ENCODE measurements at regions of chr12 and their contacts with region 1.

Region 1: GRCh38 chr12:56041552-56042429 is at the start of gene RPS26:
- DNase-seq: peak; percentile 85 to 99
- ATAC-seq: peak; percentile 89 to 97 (median 93)
- H3K4me3 ChIP-seq: peak within 1 kb of the TSS; percentile 83
- H3K4me3 Mint-ChIP-seq: peak within 1 kb of the TSS; percentile 99
- H3K27ac ChIP-seq: peak within 1 kb of the TSS; percentile 86
- H3K27ac Mint-ChIP-seq: peak within 1 kb of the TSS; percentile 93 to 98
- H3K4me1 ChIP-seq: peaks cover 14% of the 10 kb centered on the region
- H3K4me1 Mint-ChIP-seq: peaks cover 24 to 25% of the 10 kb centered on the region in 2 donors
- H3K27me3 ChIP-seq: no peaks in the 10 kb centered on the region
- H3K27me3 Mint-ChIP-seq: no peaks in the 10 kb centered on the region
- CTCF ChIP-seq: no peak
- total RNA-seq, gene RPS26: 29.5 to 50.3 (median 35.5) TPM

Region 2: DNA sequence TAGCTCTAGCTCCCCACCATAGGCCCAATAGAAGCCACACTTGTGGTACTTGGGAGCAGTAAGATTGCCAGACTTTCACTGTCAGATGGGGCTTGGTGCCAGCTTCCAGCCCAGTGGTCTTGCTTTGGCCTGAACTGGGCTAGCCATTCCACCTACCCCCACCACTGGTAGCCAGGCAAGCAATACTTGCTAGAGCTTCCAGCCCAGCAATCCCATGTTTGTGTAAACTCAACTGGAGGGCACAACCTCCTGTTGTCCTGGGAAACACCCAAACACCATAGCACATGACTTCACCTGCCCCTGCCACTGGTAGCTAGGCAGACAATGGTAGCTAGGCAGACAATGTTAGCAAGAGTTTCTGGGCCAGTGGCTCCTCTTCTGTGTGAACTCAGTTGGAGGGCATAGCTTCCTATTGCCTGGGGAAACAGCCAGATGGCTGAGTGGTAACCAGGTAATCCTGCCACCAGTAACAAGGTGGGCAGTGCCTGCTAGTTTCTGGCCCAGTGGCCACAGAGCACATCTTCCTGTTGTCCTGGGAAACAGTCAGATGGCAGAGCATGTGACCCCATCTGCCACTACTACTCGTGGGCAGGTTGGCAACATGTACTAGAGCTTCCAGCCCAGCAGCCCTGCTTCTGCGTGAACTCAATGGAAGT is 621.4 kb before region 1 on chr12:
- intact Hi-C with region 1: no loop called
- DNase-seq: no peak
- ATAC-seq: no peak
- H3K4me3 ChIP-seq: no peak overlapping the region
- H3K4me3 Mint-ChIP-seq: no peak overlapping the region
- H3K27ac ChIP-seq: no peak overlapping the region
- H3K27ac Mint-ChIP-seq: no peak overlapping the region
- H3K4me1 ChIP-seq: no peaks in the 10 kb centered on the region
- H3K4me1 Mint-ChIP-seq: peaks cover 0 to 4% of the 10 kb centered on the region in 2 donors
- H3K27me3 ChIP-seq: peaks cover 3% of the 10 kb centered on the region
- H3K27me3 Mint-ChIP-seq: peaks cover 20 to 37% of the 10 kb centered on the region in 2 donors
- CTCF ChIP-seq: no peak

Region 3: DNA sequence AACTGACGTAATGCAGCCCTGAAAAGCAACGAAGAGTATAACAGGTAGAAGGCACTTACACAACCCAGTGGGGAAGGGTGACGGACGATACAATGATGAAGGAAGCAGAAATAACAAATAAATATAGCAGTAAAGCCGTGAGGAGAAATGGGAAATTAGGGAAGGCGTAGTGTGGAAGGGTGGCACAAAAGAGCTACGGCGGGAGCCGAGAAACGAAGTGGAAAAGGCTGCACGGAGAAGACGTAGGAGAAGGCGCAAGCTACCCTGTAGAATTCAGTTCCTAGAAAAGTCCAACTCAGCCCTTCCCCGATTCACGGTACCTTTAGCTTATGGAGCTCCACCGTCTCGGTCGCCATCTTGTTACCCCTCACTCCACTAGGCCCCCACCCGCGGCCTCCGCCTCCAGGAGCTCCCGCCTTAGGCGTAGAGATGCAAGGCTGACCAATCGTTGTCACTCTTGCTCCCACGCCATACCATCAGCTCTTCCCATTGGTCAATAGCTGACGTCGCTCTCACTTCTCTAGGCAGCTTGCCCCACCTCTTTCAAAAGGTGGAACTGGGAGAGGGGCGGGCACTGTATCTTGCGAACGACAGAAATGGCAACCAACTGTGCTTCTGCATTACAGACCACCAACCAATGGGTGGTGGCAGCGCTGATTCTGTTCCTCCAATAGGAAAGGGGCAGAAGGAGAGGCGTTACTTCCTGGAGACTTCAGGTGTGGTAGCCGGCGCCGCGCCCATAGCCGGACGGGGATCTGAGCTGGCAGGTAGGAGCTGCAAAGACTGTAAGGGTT is 224.2 kb before region 1 on chr12 and contains the starts of genes ORMDL2 and SARNP:
- intact Hi-C with region 1: loop called (anchors 5 kb)
- DNase-seq: peak; percentile 88 to 99
- ATAC-seq: peak; percentile 91 to 97 (median 92)
- H3K4me3 ChIP-seq: peak within 1 kb of the TSS; percentile 85
- H3K4me3 Mint-ChIP-seq: no peak within 1 kb of the TSS
- H3K27ac ChIP-seq: peak within 1 kb of the TSS; percentile 78
- H3K27ac Mint-ChIP-seq: no peak within 1 kb of the TSS
- H3K4me1 ChIP-seq: peaks cover 22% of the 10 kb centered on the region
- H3K4me1 Mint-ChIP-seq: peaks cover 22 to 29% of the 10 kb centered on the region in 2 donors
- H3K27me3 ChIP-seq: no peaks in the 10 kb centered on the region
- H3K27me3 Mint-ChIP-seq: no peaks in the 10 kb centered on the region
- CTCF ChIP-seq: no peak
- total RNA-seq, gene ORMDL2: 21.3 to 36.3 (median 23.1) TPM
- total RNA-seq, gene SARNP: 50.5 to 57.0 (median 51.2) TPM

Region 4: DNA sequence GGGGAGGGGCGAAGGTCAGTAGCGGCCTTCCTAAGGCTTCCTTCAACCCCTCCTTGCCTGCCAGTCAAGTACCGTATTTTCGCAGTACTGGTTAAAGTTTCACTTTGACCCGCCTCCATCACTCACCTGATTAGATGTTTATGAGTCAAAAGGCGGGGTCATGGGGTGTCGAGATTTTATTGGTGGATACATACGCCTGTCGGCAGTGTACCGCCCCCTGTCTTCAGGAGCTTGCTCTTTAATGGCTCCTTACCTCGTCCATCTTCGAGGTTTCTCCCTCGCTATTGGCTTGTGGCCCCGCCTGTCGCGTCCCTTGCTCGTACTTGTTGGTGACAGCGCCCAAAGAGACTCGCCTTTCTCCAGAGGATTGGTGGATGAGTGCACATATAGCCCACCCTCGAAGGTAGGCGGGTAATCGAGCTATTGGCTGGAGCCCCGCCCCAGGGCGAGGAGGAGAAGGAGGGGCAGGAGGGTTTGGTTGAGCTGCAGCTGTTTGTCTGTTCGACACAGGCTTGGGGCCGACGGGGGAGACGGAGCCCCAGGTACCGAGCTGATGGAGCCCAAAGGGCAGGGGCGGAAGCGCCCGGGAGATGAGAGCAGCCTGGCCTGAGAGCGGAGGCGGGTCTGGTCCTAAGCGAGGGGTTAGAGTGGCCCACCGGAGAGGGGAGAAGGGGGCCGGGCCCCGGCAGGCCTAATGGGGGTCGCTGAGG is 68.0 kb before region 1 on chr12 and contains the start of gene RAB5B:
- intact Hi-C with region 1: loop called (anchors 1 kb)
- DNase-seq: peak; percentile 93 to 99
- ATAC-seq: peak; percentile 85 to 95 (median 85)
- H3K4me3 ChIP-seq: peak within 1 kb of the TSS; percentile 83
- H3K4me3 Mint-ChIP-seq: no peak within 1 kb of the TSS
- H3K27ac ChIP-seq: peak within 1 kb of the TSS; percentile 84
- H3K27ac Mint-ChIP-seq: no peak within 1 kb of the TSS
- H3K4me1 ChIP-seq: peaks cover 14% of the 10 kb centered on the region
- H3K4me1 Mint-ChIP-seq: peaks cover 18 to 24% of the 10 kb centered on the region in 2 donors
- H3K27me3 ChIP-seq: no peaks in the 10 kb centered on the region
- H3K27me3 Mint-ChIP-seq: no peaks in the 10 kb centered on the region
- CTCF ChIP-seq: no peak
- total RNA-seq, gene RAB5B: 69.4 to 80.0 (median 78.2) TPM

Region 5: DNA sequence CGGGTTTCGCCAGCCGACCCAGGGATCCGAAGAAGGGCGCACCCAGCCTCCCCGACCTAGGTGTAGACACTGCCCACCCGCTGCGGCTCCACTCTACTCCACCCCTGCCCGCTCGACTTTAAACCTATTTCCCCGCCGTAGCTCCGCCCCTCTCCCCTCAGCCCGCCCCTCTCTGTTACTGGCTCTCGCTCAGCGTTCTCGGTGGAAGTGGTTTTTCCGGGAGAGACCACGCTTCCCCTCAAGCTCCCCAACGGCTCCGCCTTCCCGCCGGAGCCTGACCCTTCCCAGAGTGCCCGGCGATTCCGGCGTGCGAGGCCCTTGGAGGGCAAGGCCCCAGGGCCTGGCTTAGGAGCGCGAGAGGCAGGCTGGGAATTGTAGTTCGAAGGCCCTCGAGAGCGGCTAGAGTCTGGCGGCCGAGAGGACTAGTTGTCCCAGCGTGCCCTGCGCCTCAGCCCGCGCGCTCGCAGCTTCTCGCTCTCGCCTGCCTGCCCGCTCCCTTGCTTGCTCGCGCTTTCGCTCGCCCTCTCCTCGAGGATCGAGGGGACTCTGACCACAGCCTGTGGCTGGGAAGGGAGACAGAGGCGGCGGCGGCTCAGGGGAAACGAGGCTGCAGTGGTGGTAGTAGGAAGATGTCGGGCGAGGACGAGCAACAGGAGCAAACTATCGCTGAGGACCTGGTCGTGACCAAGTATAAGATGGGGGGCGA is 62.5 kb after region 1 on chr12 and contains the start of gene PA2G4:
- intact Hi-C with region 1: loop called (anchors 1 kb)
- DNase-seq: peak; percentile 87 to 97
- ATAC-seq: peak; percentile 92 to 97 (median 93)
- H3K4me3 ChIP-seq: peak within 1 kb of the TSS; percentile 81
- H3K4me3 Mint-ChIP-seq: peak within 1 kb of the TSS; percentile 100
- H3K27ac ChIP-seq: peak within 1 kb of the TSS; percentile 80
- H3K27ac Mint-ChIP-seq: peak within 1 kb of the TSS; percentile 97 to 99
- H3K4me1 ChIP-seq: peaks cover 37% of the 10 kb centered on the region
- H3K4me1 Mint-ChIP-seq: peaks cover 52 to 56% of the 10 kb centered on the region in 2 donors
- H3K27me3 ChIP-seq: no peaks in the 10 kb centered on the region
- H3K27me3 Mint-ChIP-seq: no peaks in the 10 kb centered on the region
- CTCF ChIP-seq: no peak
- total RNA-seq, gene PA2G4: 78.5 to 86.4 (median 79.7) TPM

Region 6: GRCh38 chr12:56189176-56189917 is 147.6 kb after region 1 on chr12 and contains the start of gene SMARCC2:
- intact Hi-C with region 1: loop called (anchors 10 kb)
- DNase-seq: peak; percentile 83 to 94
- ATAC-seq: peak; percentile 81 to 94 (median 83)
- H3K4me3 ChIP-seq: peak within 1 kb of the TSS; percentile 96
- H3K4me3 Mint-ChIP-seq: peak within 1 kb of the TSS; percentile 99
- H3K27ac ChIP-seq: peak within 1 kb of the TSS; percentile 96
- H3K27ac Mint-ChIP-seq: peak within 1 kb of the TSS; percentile 98
- H3K4me1 ChIP-seq: peaks cover 27% of the 10 kb centered on the region
- H3K4me1 Mint-ChIP-seq: peaks cover 43 to 55% of the 10 kb centered on the region in 2 donors
- H3K27me3 ChIP-seq: no peaks in the 10 kb centered on the region
- H3K27me3 Mint-ChIP-seq: no peaks in the 10 kb centered on the region
- CTCF ChIP-seq: peak; percentile 66
- total RNA-seq, gene SMARCC2: 205 to 232 (median 210) TPM